Activated CD4-positive, alpha-beta memory T cell treated with anti-CD3 and anti-CD28 coated beads for 36 hours (primary cell): ENCODE measurements at regions of chr5 and their contacts with region 1.

Region 1: DNA sequence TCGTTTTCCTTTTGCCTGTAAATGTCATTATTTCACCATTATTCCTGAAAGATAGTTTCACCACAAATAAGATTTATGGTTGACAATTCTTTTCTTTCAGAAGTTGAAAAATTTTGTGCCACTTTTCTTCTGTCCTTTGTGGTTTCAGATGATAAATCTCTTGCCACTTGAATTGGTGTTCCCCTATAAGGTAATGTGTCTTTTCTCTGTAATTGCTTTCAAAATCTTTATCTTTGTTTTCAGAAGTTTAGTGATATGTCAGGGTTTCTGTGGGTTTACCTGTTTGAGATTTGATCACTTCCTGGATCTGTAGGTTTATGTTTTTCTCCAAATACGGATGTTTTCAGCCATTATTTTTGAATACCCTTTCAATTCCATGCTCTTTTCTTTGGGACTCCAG is 14.6 kb downstream of the RASA1 start:
- DNase-seq: no peak
- H3K4me3 Mint-ChIP-seq: peak overlapping the region; percentile 70
- H3K27ac Mint-ChIP-seq: peak overlapping the region; percentile 89
- H3K4me1 Mint-ChIP-seq: peaks cover 48% of the 10 kb centered on the region
- H3K27me3 Mint-ChIP-seq: no peaks in the 10 kb centered on the region

Region 2: DNA sequence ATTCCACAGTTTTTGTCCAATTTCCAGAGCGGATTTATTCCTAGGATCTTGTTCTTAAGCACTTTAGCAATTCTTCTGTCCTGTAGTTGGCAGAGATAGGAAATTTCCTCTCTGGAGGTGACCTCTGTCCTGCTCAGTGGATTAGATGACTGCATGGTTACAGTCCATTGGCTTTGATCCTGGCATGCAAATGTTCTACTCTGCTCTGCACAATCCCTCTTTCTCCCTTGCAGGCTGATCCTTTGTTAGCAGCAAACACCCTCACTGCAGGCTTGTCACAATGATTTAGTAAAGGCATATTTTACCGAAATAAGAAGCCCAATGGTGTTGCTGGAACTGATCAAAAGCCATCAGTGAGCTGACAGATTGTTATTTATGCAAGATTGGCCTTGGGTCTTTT is 420.8 kb before region 1 on chr5:
- CTCF ChIA-PET with region 1: no interaction called
- POLR2A ChIA-PET with region 1: no interaction called
- intact Hi-C with region 1: no loop called
- DNase-seq: no peak
- H3K4me3 Mint-ChIP-seq: no peak overlapping the region
- H3K27ac Mint-ChIP-seq: no peak overlapping the region
- H3K4me1 Mint-ChIP-seq: no peaks in the 10 kb centered on the region
- H3K27me3 Mint-ChIP-seq: peaks cover 6% of the 10 kb centered on the region

Region 3: GRCh38 chr5:87300744-87301143 is 18.5 kb after region 1 on chr5:
- CTCF ChIA-PET with region 1: interaction called, 6 read pairs
- POLR2A ChIA-PET with region 1: no interaction called
- intact Hi-C with region 1: loop called (anchors 1 kb)
- DNase-seq: peak; percentile 70
- H3K4me3 Mint-ChIP-seq: no peak overlapping the region
- H3K27ac Mint-ChIP-seq: no peak overlapping the region
- H3K4me1 Mint-ChIP-seq: peaks cover 65% of the 10 kb centered on the region
- H3K27me3 Mint-ChIP-seq: no peaks in the 10 kb centered on the region

Region 4: GRCh38 chr5:87899721-87900131 is 617.5 kb after region 1 on chr5:
- CTCF ChIA-PET with region 1: no interaction called
- POLR2A ChIA-PET with region 1: no interaction called
- intact Hi-C with region 1: no loop called
- DNase-seq: no peak
- H3K4me3 Mint-ChIP-seq: no peak overlapping the region
- H3K27ac Mint-ChIP-seq: no peak overlapping the region
- H3K4me1 Mint-ChIP-seq: no peaks in the 10 kb centered on the region
- H3K27me3 Mint-ChIP-seq: no peaks in the 10 kb centered on the region